ENCODE measurements at regions of chr12 and their contacts with region 1.

Region 1: GRCh38 chr12:75977952-75978671 is 53.5 kb downstream of the PHLDA1 start:
- DNase-seq: peak; percentile 99
- ATAC-seq: peak; percentile 78
- H3K4me3 ChIP-seq: peak overlapping the region; percentile 25; the same call in 1 of the 2 replicates
- H3K27ac ChIP-seq: peak overlapping the region; percentile 99
- H3K4me1 ChIP-seq: peaks cover 45% of the 10 kb centered on the region
- H3K27me3 ChIP-seq: no peaks in the 10 kb centered on the region
- CTCF ChIP-seq: no peak

Region 2: GRCh38 chr12:75658901-75659383 is 319.2 kb before region 1 on chr12:
- CTCF ChIA-PET with region 1: no interaction called
- POLR2A ChIA-PET with region 1: no interaction called
- intact Hi-C with region 1: loop called (anchors 1 kb)
- DNase-seq: peak; percentile 79
- ATAC-seq: peak; percentile 63
- H3K4me3 ChIP-seq: no peak overlapping the region
- H3K27ac ChIP-seq: peak overlapping the region; percentile 95
- H3K4me1 ChIP-seq: peaks cover 67% of the 10 kb centered on the region
- H3K27me3 ChIP-seq: no peaks in the 10 kb centered on the region
- CTCF ChIP-seq: no peak

Region 3: GRCh38 chr12:75814851-75815754 is 163.0 kb before region 1 on chr12:
- CTCF ChIA-PET with region 1: no interaction called
- POLR2A ChIA-PET with region 1: interaction called, 3 read pairs
- intact Hi-C with region 1: loop called (anchors 1 kb)
- DNase-seq: peak; percentile 71
- ATAC-seq: peak; percentile 60
- H3K4me3 ChIP-seq: no peak overlapping the region
- H3K27ac ChIP-seq: peak overlapping the region; percentile 39
- H3K4me1 ChIP-seq: peaks cover 29% of the 10 kb centered on the region
- H3K27me3 ChIP-seq: no peaks in the 10 kb centered on the region
- CTCF ChIP-seq: no peak

Region 4: GRCh38 chr12:75862692-75863471 is 115.2 kb before region 1 on chr12:
- CTCF ChIA-PET with region 1: interaction called, 3 read pairs
- POLR2A ChIA-PET with region 1: interaction called, 8 read pairs
- intact Hi-C with region 1: loop called (anchors 1 kb)
- DNase-seq: peak; percentile 97
- ATAC-seq: peak; percentile 77
- H3K4me3 ChIP-seq: peak overlapping the region; percentile 36; the same call in 1 of the 2 replicates
- H3K27ac ChIP-seq: peak overlapping the region; percentile 98
- H3K4me1 ChIP-seq: peaks cover 57% of the 10 kb centered on the region
- H3K27me3 ChIP-seq: no peaks in the 10 kb centered on the region
- CTCF ChIP-seq: no peak

Region 5: GRCh38 chr12:75954041-75954440 is 24.1 kb before region 1 on chr12:
- CTCF ChIA-PET with region 1: interaction called, 3 read pairs
- POLR2A ChIA-PET with region 1: no interaction called
- intact Hi-C with region 1: loop called (anchors 1 kb)
- DNase-seq: peak; percentile 96
- ATAC-seq: peak; percentile 77
- H3K4me3 ChIP-seq: no peak overlapping the region
- H3K27ac ChIP-seq: peak overlapping the region; percentile 89
- H3K4me1 ChIP-seq: peaks cover 49% of the 10 kb centered on the region
- H3K27me3 ChIP-seq: no peaks in the 10 kb centered on the region
- CTCF ChIP-seq: no peak

Region 6: GRCh38 chr12:76137606-76138005 is 159.5 kb after region 1 on chr12:
- CTCF ChIA-PET with region 1: no interaction called
- POLR2A ChIA-PET with region 1: no interaction called
- intact Hi-C with region 1: no loop called
- DNase-seq: no peak
- ATAC-seq: no peak
- H3K4me3 ChIP-seq: no peak overlapping the region
- H3K27ac ChIP-seq: no peak overlapping the region
- H3K4me1 ChIP-seq: no peaks in the 10 kb centered on the region
- H3K27me3 ChIP-seq: no peaks in the 10 kb centered on the region
- CTCF ChIP-seq: no peak

Region 7: DNA sequence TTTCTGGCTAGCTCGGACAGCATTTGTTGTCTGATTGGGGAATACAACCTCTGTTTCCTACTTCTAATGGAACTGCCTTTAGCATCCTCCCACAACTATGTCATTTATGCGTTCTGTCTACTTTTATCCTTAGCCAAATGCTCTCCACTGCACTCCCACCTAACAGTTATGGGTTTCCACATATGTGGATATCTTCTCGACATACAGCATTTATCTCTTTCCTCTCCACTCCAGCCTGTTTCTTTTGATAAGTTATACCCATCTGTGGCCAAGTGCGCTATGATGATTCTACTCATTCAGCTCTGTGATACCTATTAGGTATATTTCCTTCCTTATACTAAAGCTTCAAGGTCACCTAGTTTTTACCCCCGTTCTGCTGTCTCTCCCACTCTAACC is 228.6 kb after region 1 on chr12:
- CTCF ChIA-PET with region 1: no interaction called
- POLR2A ChIA-PET with region 1: no interaction called
- intact Hi-C with region 1: no loop called
- DNase-seq: no peak
- ATAC-seq: no peak
- H3K4me3 ChIP-seq: no peak overlapping the region
- H3K27ac ChIP-seq: no peak overlapping the region
- H3K4me1 ChIP-seq: no peaks in the 10 kb centered on the region
- H3K27me3 ChIP-seq: no peaks in the 10 kb centered on the region
- CTCF ChIP-seq: no peak

Measured in PC-3 (cell line).